PC-3 (cell line): ENCODE measurements at regions of chr14 and their contacts with region 1.

Region 1: DNA sequence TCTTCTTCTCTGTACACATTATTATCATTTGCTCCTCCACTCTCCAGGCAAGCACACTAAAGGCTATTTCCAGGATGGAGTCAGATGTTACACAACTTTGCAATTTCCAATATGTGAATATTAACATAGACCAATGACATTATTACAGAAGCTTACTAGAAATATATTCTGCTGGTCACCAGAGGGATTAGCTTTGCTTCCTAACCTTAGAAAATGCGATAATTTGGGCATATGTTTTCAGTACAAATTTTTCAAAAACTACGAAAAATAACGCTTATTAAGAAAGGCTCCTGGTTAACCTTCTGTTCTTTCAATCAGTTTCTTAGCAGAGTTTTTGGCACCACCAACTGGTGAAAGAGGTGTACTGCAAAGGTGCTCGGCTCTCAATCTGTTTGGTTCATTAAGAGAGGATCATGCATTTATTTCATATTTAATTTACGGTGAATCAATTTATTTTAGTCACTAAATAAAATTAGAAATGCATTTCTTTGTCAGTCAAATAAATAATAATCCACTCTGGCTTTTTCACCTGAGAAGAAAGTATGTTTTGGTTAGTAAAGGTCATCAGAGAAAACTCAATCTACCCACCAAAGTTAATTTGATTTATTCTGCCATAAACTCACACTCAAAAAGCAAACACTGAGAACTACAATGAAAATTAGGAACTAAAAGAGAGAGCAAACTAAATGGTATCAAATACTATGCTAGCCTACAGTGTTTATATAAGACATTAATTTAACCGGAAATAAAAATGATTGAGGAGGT is 39.2 kb downstream of the EFCAB11 start:
- DNase-seq: peak; percentile 86
- ATAC-seq: no peak
- H3K4me3 ChIP-seq: no peak overlapping the region
- H3K27ac ChIP-seq: peak overlapping the region; percentile 81; the same call in 1 of the 2 replicates
- H3K4me1 ChIP-seq: peaks cover 45% of the 10 kb centered on the region
- H3K27me3 ChIP-seq: no peaks in the 10 kb centered on the region
- CTCF ChIP-seq: peak; percentile 92

Region 2: GRCh38 chr14:89303457-89304435 is 611.5 kb before region 1 on chr14:
- CTCF ChIA-PET with region 1: no interaction called
- POLR2A ChIA-PET with region 1: no interaction called
- intact Hi-C with region 1: loop called (anchors 10 kb)
- DNase-seq: peak; percentile 64
- ATAC-seq: peak; percentile 50
- H3K4me3 ChIP-seq: peak overlapping the region; percentile 44
- H3K27ac ChIP-seq: peak overlapping the region; percentile 93
- H3K4me1 ChIP-seq: peaks cover 38% of the 10 kb centered on the region
- H3K27me3 ChIP-seq: no peaks in the 10 kb centered on the region
- CTCF ChIP-seq: no peak

Region 3: DNA sequence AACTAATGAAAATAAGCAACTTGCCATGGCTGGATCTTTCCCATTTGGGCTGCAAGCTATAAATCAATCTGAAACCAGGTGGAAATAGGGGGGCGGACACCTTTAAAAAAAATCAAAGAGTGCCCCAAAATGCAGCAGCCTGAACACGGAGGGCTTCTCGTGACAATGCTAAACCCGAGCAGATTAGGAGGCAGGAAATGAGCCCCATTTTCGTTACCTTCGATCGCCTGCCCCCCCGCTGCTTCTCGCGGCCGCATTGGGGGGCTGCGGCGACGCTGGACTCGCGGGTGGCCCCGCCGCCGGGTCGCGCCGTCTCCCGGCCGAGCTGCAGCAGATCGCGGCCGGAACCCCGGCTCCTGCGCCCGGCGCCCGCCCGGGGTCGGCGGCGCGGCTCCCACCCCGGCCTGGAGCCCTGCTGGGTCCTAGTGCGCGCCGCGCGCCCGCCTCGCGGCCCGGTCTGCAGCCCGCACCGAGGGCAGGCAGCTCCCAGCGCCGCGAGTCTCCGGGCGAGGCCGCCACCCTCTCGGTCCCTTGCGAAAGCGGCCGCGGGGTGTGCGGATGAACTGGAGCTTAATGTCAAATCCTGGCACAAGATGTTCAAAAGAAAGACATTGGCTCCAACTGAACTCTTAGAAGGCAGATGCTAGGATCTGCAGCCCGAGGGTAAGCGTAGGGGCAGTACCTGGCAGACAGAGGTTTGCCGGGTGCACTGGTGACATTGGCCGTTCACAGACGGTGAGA is 296.3 kb before region 1 on chr14:
- CTCF ChIA-PET with region 1: no interaction called
- POLR2A ChIA-PET with region 1: no interaction called
- intact Hi-C with region 1: loop called (anchors 5 kb)
- DNase-seq: peak; percentile 58
- ATAC-seq: peak; percentile 83
- H3K4me3 ChIP-seq: peak overlapping the region; percentile 79
- H3K27ac ChIP-seq: no peak overlapping the region
- H3K4me1 ChIP-seq: 0 out of 2 replicates have a peak, but pooled peaks cover 4% of the 10 kb centered on the region
- H3K27me3 ChIP-seq: no peaks in the 10 kb centered on the region
- CTCF ChIP-seq: no peak

Region 4: GRCh38 chr14:89773644-89774316 is 141.5 kb before region 1 on chr14:
- CTCF ChIA-PET with region 1: interaction called, 3 read pairs
- POLR2A ChIA-PET with region 1: no interaction called
- intact Hi-C with region 1: loop called (anchors 10 kb)
- DNase-seq: peak; percentile 33
- ATAC-seq: peak; percentile 72
- H3K4me3 ChIP-seq: no peak overlapping the region
- H3K27ac ChIP-seq: no peak overlapping the region
- H3K4me1 ChIP-seq: peaks cover 5% of the 10 kb centered on the region; the same call in 1 of the 2 replicates
- H3K27me3 ChIP-seq: no peaks in the 10 kb centered on the region
- CTCF ChIP-seq: no peak

Region 5: DNA sequence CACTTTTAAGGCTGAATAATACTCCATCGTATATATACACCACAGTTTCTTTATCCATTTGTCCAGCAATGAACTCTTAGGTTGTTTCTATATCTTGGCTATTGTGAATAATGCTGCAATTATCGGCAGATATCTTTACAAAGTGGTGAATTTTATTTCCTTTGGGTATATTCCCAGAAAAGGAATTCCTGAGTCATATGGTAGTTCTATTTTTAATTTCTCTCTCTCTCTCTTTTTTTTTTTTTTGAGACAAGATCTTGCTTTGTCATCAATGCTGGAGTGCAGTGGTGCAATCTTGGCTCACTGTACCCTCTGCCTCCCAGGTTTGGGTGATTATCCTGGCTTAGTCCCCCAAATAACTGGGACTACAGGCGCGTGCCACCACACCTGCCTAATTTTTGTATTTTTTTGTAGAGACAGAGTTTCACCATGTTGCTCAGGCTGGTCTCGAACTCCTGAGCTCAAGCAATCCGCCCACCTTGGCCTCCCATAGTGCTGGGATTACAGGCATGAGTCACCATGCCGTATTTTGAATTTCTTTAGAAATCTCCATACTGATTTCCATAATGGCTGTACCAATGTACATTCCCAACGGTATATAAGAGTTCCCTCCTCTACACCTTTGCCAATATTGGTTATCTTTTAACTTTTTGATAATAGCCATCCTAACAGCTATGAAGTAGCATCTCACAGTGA is 59.2 kb before region 1 on chr14:
- CTCF ChIA-PET with region 1: no interaction called
- POLR2A ChIA-PET with region 1: no interaction called
- intact Hi-C with region 1: loop called (anchors 2 kb)
- DNase-seq: peak; percentile 73
- ATAC-seq: peak; percentile 38
- H3K4me3 ChIP-seq: no peak overlapping the region
- H3K27ac ChIP-seq: peak overlapping the region; percentile 83
- H3K4me1 ChIP-seq: peaks cover 29% of the 10 kb centered on the region
- H3K27me3 ChIP-seq: no peaks in the 10 kb centered on the region
- CTCF ChIP-seq: no peak